Activated CD8-positive, alpha-beta T cell treated with anti-CD3 and anti-CD28 coated beads, Interleukin-2, amount 10 ng/mL, durations not matched to agents 7 days and 5 days (primary cell): ENCODE measurements at regions of chr1 and their contacts with region 1.

Region 1: DNA sequence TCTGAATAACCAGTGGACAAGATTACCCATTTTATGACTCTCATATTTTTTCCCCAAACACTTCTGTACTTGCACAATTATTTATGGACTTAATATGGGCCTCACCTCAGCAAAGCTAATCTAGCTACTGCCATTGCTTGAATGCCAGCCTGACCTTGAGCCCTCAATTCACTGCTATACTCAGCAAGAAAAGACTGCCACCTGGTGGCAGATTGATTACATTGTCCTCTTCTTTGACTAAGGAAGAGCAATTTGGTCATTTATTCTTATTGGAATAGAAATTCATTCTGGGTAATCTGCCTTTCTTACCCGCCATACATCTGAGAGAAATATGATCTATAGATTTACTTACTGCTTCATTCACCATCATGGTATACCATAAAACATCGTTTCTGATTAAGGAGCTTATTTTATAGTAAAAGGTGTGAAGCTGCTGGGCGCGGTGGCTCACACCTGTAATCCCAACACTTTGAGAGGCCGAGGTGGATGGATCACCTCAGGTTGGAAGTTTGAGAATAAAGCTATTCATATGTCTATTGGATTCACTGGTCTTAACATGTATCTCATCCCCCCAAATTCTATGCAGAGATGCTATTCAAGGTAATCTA is 32.9 kb upstream of the DIPK1A start:
- DNase-seq: peak; percentile 89
- ATAC-seq: peak; percentile 83
- H3K4me3 Mint-ChIP-seq: no peak overlapping the region
- H3K27ac Mint-ChIP-seq: peak overlapping the region; percentile 71
- H3K4me1 Mint-ChIP-seq: peaks cover 60% of the 10 kb centered on the region
- H3K27me3 Mint-ChIP-seq: no peaks in the 10 kb centered on the region

Region 2: GRCh38 chr1:92749024-92749634 is 245.1 kb before region 1 on chr1:
- CTCF ChIA-PET with region 1: interaction called, 10 read pairs
- POLR2A ChIA-PET with region 1: no interaction called
- DNase-seq: peak; percentile 55
- ATAC-seq: no peak
- H3K4me3 Mint-ChIP-seq: no peak overlapping the region
- H3K27ac Mint-ChIP-seq: no peak overlapping the region
- H3K4me1 Mint-ChIP-seq: no peaks in the 10 kb centered on the region
- H3K27me3 Mint-ChIP-seq: peaks cover 7% of the 10 kb centered on the region

Region 3: GRCh38 chr1:92872719-92873118 is 121.5 kb before region 1 on chr1:
- CTCF ChIA-PET with region 1: interaction called, 22 read pairs
- POLR2A ChIA-PET with region 1: no interaction called
- DNase-seq: no peak
- ATAC-seq: no peak
- H3K4me3 Mint-ChIP-seq: no peak overlapping the region
- H3K27ac Mint-ChIP-seq: no peak overlapping the region
- H3K4me1 Mint-ChIP-seq: peaks cover 10% of the 10 kb centered on the region
- H3K27me3 Mint-ChIP-seq: no peaks in the 10 kb centered on the region

Region 4: DNA sequence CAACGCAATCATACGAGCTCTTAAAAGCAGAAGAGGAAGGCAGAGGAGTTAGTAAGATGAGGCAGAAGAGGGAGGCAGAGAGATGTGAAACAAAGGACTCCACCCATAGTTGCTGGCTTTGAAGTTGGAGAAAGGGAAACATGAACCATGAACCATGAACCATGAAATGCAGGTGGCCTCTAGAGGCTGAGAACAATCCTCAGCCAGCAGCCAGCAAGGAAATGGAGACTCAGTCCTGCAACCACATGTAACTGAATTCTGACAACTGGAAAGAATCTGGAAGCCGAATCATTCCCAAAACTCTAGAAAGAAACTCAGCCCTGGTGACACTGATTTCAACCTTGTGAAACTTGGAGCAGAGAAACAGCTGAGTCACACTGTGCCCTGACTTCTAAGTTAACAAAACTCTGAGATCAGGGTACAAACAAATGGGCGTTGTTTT is 43.0 kb before region 1 on chr1:
- CTCF ChIA-PET with region 1: interaction called, 623 read pairs
- POLR2A ChIA-PET with region 1: no interaction called
- DNase-seq: peak; percentile 45
- ATAC-seq: peak; percentile 69
- H3K4me3 Mint-ChIP-seq: no peak overlapping the region
- H3K27ac Mint-ChIP-seq: no peak overlapping the region
- H3K4me1 Mint-ChIP-seq: peaks cover 38% of the 10 kb centered on the region
- H3K27me3 Mint-ChIP-seq: no peaks in the 10 kb centered on the region

Region 5: DNA sequence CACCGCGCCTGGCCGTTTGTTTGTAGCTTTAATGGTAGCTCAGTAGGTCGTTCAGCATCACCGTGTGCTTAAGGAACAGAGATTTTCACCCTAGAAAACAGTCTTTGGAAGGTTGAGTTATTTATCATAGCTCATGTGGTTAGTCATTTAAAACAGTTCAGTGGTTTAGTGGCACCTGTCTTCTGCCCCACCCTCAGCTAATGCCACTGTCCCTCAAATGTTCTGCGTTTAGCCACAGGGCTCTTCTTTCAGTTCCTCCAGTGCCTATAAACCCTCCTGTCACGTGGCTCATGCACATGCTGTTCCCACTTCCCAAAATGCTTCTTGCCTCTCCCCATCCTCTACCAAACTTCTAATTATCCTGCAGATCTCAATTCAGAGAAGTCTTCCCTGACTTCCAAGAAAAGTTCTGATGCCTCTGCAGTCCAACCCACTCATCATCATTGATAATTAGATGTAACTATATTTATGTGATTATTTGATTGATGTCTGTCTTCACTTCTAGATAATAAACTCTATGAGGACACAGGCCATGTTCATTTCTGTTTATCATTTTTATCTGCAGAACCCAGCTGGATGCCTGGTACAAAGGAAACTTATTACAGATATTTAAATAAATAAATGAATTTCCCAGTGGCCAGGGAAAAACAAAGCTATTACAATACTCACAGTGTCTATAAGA is 18.5 kb before region 1 on chr1:
- CTCF ChIA-PET with region 1: interaction called, 623 read pairs
- POLR2A ChIA-PET with region 1: interaction called, 15 read pairs
- DNase-seq: peak; percentile 41
- ATAC-seq: peak; percentile 29
- H3K4me3 Mint-ChIP-seq: no peak overlapping the region
- H3K27ac Mint-ChIP-seq: peak overlapping the region; percentile 69
- H3K4me1 Mint-ChIP-seq: peaks cover 74% of the 10 kb centered on the region
- H3K27me3 Mint-ChIP-seq: no peaks in the 10 kb centered on the region

Region 6: GRCh38 chr1:93015590-93015989 is 21.4 kb after region 1 on chr1:
- CTCF ChIA-PET with region 1: interaction called, 19 read pairs
- POLR2A ChIA-PET with region 1: no interaction called
- DNase-seq: no peak
- ATAC-seq: no peak
- H3K4me3 Mint-ChIP-seq: no peak overlapping the region
- H3K27ac Mint-ChIP-seq: no peak overlapping the region
- H3K4me1 Mint-ChIP-seq: peaks cover 13% of the 10 kb centered on the region
- H3K27me3 Mint-ChIP-seq: peaks cover 26% of the 10 kb centered on the region